Activated B cell treated with CpG ODN at 0.5 μM for 24 hours (primary cell): ENCODE measurements at regions of chr18 and their contacts with region 1.

Region 1: GRCh38 chr18:77101410-77102258 is 30.9 kb downstream of the MBP start:
- DNase-seq: no peak
- ATAC-seq: peak; percentile 68
- H3K4me3 Mint-ChIP-seq: peak overlapping the region; percentile 79
- H3K27ac Mint-ChIP-seq: peak overlapping the region; percentile 95
- H3K4me1 Mint-ChIP-seq: peaks cover 92% of the 10 kb centered on the region
- H3K27me3 Mint-ChIP-seq: no peaks in the 10 kb centered on the region
- CTCF ChIP-seq: no peak

Region 2: DNA sequence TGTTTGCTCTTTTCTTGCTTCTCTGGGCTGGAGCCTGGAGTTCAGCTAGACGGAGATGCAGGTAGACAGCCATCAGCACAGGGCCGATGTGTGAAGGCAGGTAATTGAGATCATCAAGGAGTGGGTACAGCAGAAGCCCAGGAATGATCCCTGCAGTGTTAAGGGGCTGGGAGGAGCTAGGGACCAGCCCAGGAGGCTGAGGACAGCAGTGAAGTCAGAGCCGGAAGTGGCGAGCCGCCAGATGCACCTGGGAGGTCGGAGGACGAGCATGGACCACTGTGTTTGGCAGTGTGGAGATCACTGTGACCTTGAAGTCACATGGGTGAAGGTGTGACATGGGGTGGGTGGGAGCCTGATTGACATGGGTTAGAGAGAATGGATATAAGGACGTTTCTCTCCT is 285.5 kb before region 1 on chr18:
- CTCF ChIA-PET with region 1: no interaction called
- POLR2A ChIA-PET with region 1: no interaction called
- intact Hi-C with region 1: no loop called
- DNase-seq: no peak
- ATAC-seq: no peak
- H3K4me3 Mint-ChIP-seq: no peak overlapping the region
- H3K27ac Mint-ChIP-seq: peak overlapping the region; percentile 51
- H3K4me1 Mint-ChIP-seq: peaks cover 34% of the 10 kb centered on the region
- H3K27me3 Mint-ChIP-seq: no peaks in the 10 kb centered on the region
- CTCF ChIP-seq: no peak

Region 3: GRCh38 chr18:77079954-77080682 is 21.5 kb before region 1 on chr18:
- CTCF ChIA-PET with region 1: no interaction called
- POLR2A ChIA-PET with region 1: interaction called, 12 read pairs
- intact Hi-C with region 1: loop called (anchors 1 kb)
- DNase-seq: peak; percentile 60
- ATAC-seq: peak; percentile 99
- H3K4me3 Mint-ChIP-seq: peak overlapping the region; percentile 45
- H3K27ac Mint-ChIP-seq: peak overlapping the region; percentile 84
- H3K4me1 Mint-ChIP-seq: peaks cover 52% of the 10 kb centered on the region
- H3K27me3 Mint-ChIP-seq: no peaks in the 10 kb centered on the region
- CTCF ChIP-seq: no peak

Region 4: GRCh38 chr18:77124452-77124922 is 22.9 kb after region 1 on chr18:
- CTCF ChIA-PET with region 1: interaction called, 5 read pairs
- POLR2A ChIA-PET with region 1: interaction called, 32 read pairs
- intact Hi-C with region 1: loop called (anchors 1 kb)
- DNase-seq: no peak
- ATAC-seq: peak; percentile 43
- H3K4me3 Mint-ChIP-seq: peak overlapping the region; percentile 38
- H3K27ac Mint-ChIP-seq: peak overlapping the region; percentile 77
- H3K4me1 Mint-ChIP-seq: peaks cover 94% of the 10 kb centered on the region
- H3K27me3 Mint-ChIP-seq: no peaks in the 10 kb centered on the region
- CTCF ChIP-seq: no peak

Region 5: DNA sequence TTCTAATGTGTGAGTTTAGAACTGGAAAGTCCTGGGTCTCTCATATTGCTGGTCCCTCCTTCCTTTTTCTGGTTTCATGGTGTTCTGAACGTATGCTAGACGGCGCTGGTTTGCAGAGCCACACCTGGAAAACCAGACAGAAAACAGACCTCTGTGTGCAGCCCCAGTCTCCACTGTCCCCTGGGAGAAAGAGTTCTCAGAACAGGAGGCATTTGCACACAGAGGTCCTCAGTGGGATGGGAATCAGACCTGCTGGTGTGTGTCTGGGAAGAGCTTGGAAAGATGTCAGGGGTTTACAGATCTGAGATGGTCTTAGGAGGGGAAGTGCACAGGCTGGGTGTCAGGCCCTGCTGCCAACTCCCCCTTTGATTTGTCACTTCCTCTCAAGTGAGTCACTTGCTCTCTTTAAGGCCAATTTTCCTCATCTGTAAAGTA is 45.8 kb after region 1 on chr18:
- CTCF ChIA-PET with region 1: no interaction called
- POLR2A ChIA-PET with region 1: interaction called, 3 read pairs
- intact Hi-C with region 1: loop called (anchors 1 kb)
- DNase-seq: peak; percentile 37
- ATAC-seq: peak; percentile 76
- H3K4me3 Mint-ChIP-seq: peak overlapping the region; percentile 66
- H3K27ac Mint-ChIP-seq: peak overlapping the region; percentile 96
- H3K4me1 Mint-ChIP-seq: peaks cover 46% of the 10 kb centered on the region
- H3K27me3 Mint-ChIP-seq: no peaks in the 10 kb centered on the region
- CTCF ChIP-seq: no peak

Region 6: DNA sequence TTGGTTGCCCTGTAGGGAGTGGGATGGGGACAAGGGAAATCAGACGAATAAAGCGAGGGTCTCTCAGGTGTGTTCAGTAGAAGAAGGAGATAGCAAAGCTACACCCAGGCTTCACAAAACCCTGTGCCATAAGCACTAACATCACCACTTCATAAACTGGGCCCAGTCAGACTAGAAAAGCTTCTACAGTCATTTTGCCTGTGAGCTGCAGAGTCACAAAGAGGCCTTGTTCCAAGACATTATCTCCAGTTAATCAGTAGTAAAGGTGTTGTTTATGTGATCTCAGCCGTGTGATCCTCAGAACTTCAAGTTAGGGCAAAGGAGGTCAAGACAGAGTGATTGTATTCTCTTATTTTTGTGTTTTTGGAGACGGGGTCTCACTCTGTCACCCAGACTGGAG is 296.0 kb after region 1 on chr18:
- CTCF ChIA-PET with region 1: no interaction called
- POLR2A ChIA-PET with region 1: no interaction called
- intact Hi-C with region 1: no loop called
- DNase-seq: no peak
- ATAC-seq: no peak
- H3K4me3 Mint-ChIP-seq: no peak overlapping the region
- H3K27ac Mint-ChIP-seq: no peak overlapping the region
- H3K4me1 Mint-ChIP-seq: no peaks in the 10 kb centered on the region
- H3K27me3 Mint-ChIP-seq: peaks cover 2% of the 10 kb centered on the region
- CTCF ChIP-seq: no peak